ENCODE measurements at regions of chr19 and their contacts with region 1.

Region 1: GRCh38 chr19:8412783-8413628 is at the start of gene MARCHF2:
- DNase-seq: peak; percentile 95 to 97
- ATAC-seq: peak; percentile 98 to 100 (median 99)
- H3K4me3 ChIP-seq: peak within 1 kb of the TSS; percentile 40 to 100 (median 93)
- H3K27ac ChIP-seq: peak within 1 kb of the TSS; percentile 83 to 96 (median 92)
- H3K4me1 ChIP-seq: peaks cover 5 to 62% (median 39%) of the 10 kb centered on the region in 9 donors
- H3K27me3 ChIP-seq: no peaks in the 10 kb centered on the region
- CTCF ChIP-seq: peak; percentile 41 to 92 (median 73)
- total RNA-seq, gene MARCHF2: 70.4 to 104 (median 90.8) TPM

Region 2: GRCh38 chr19:8373867-8374813 is 38.9 kb before region 1 on chr19:
- intact Hi-C with region 1: no loop called
- DNase-seq: no peak
- ATAC-seq: peak in 6 of 8 donors; percentile 24 to 60 (median 44)
- H3K4me3 ChIP-seq: no peak overlapping the region
- H3K27ac ChIP-seq: peak overlapping the region in 1 of 10 donors; percentile 52
- H3K4me1 ChIP-seq: peaks cover 0 to 22% (median under 1%) of the 10 kb centered on the region in 9 donors
- H3K27me3 ChIP-seq: no peaks in the 10 kb centered on the region
- CTCF ChIP-seq: peak in 1 of 9 donors; percentile 8

Region 3: GRCh38 chr19:8396563-8397203 is 16.3 kb before region 1 on chr19:
- intact Hi-C with region 1: loop called in 1 of 10 experiments (anchors 2 kb)
- DNase-seq: peak; percentile 55 to 79
- ATAC-seq: peak; percentile 5 to 59 (median 36)
- H3K4me3 ChIP-seq: no peak overlapping the region
- H3K27ac ChIP-seq: peak overlapping the region in 4 of 10 donors; percentile 15 to 100 (median 50)
- H3K4me1 ChIP-seq: peaks cover 34 to 71% (median 63%) of the 10 kb centered on the region in 9 donors
- H3K27me3 ChIP-seq: no peaks in the 10 kb centered on the region
- CTCF ChIP-seq: peak; percentile 45 to 78 (median 66)

Region 4: GRCh38 chr19:8444645-8445487 is 31.9 kb after region 1 on chr19 and contains the start of gene HNRNPM:
- intact Hi-C with region 1: loop called in 4 of 10 experiments (anchors 2 to 5 kb)
- DNase-seq: peak; percentile 99 to 100
- ATAC-seq: peak; percentile 98 to 100 (median 99)
- H3K4me3 ChIP-seq: peak within 1 kb of the TSS; percentile 81 to 99 (median 90)
- H3K27ac ChIP-seq: peak within 1 kb of the TSS; percentile 90 to 99 (median 97)
- H3K4me1 ChIP-seq: peaks cover 23 to 48% (median 42%) of the 10 kb centered on the region in 9 donors
- H3K27me3 ChIP-seq: no peaks in the 10 kb centered on the region
- CTCF ChIP-seq: no peak
- total RNA-seq, gene HNRNPM: 87.4 to 127 (median 93.9) TPM

Region 5: GRCh38 chr19:8451885-8452284 is 38.9 kb after region 1 on chr19:
- intact Hi-C with region 1: loop called in 3 of 10 experiments (anchors 5 kb)
- DNase-seq: no peak
- ATAC-seq: no peak
- H3K4me3 ChIP-seq: no peak overlapping the region
- H3K27ac ChIP-seq: peak overlapping the region in 1 of 10 donors; percentile 14
- H3K4me1 ChIP-seq: peaks cover 30 to 98% (median 85%) of the 10 kb centered on the region in 9 donors
- H3K27me3 ChIP-seq: no peaks in the 10 kb centered on the region
- CTCF ChIP-seq: no peak

Region 6: DNA sequence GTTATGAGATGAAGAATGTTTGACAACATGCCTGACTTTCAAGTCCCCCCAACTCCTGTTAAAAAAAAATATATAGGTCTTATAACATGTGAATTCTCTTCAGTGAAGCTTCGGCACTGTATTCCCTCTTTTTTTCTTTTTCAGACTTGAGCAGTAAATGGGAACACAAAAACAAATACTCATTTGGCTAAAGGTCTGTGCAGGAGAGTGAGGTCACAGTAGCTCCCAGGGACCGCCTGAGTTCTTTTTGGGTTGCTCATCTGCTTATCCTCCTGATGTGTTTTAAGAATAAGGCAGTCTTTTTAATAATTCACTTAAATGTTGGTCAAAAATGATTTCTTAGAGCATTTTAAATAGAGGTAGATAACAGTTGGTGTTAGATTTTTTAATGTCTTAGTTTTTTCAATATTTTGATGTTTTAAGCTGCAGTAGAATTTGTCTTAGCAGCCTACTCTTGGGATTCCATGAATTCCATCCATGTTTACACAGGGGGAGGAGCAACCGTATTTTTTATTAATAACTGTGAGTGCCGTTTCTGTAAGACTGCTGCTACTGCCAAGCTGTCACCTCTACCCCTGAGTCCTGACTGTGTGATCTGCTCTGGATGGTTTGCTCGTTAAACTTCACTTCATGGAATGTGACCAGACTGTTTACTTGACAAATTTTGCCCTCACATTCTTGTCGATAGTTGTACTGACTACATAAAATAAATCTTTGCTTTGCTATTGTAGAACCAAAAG is 46.7 kb after region 1 on chr19:
- intact Hi-C with region 1: loop called in 2 of 10 experiments (anchors 5 to 10 kb)
- DNase-seq: no peak
- ATAC-seq: peak in 6 of 8 donors; percentile 46 to 55 (median 50)
- H3K4me3 ChIP-seq: peak overlapping the region in 3 of 10 donors; percentile 7 to 12 (median 10)
- H3K27ac ChIP-seq: peak overlapping the region in 8 of 10 donors; percentile 31 to 71 (median 46)
- H3K4me1 ChIP-seq: peaks cover 35 to 91% (median 77%) of the 10 kb centered on the region in 9 donors
- H3K27me3 ChIP-seq: no peaks in the 10 kb centered on the region
- CTCF ChIP-seq: no peak

Region 7: GRCh38 chr19:8505680-8506401 is 92.8 kb after region 1 on chr19:
- intact Hi-C with region 1: loop called in 7 of 10 experiments (anchors 5 to 10 kb)
- DNase-seq: peak; percentile 78 to 86
- ATAC-seq: peak; percentile 85 to 92 (median 90)
- H3K4me3 ChIP-seq: peak overlapping the region; percentile 23 to 70 (median 62)
- H3K27ac ChIP-seq: peak overlapping the region in 8 of 10 donors; percentile 13 to 58 (median 35)
- H3K4me1 ChIP-seq: peaks cover 2 to 55% (median 14%) of the 10 kb centered on the region in 9 donors
- H3K27me3 ChIP-seq: no peaks in the 10 kb centered on the region
- CTCF ChIP-seq: peak; percentile 80 to 97 (median 89)